Left ventricle myocardium inferior (tissue), 1 donor: ENCODE measurements at regions of chr3 and their contacts with region 1.

Region 1: GRCh38 chr3:98994128-98994762 is 92.8 kb upstream of the DCBLD2 start:
- DNase-seq: no peak
- H3K4me3 ChIP-seq: no peak overlapping the region
- H3K27ac ChIP-seq: no peak overlapping the region
- H3K4me1 ChIP-seq: no peaks in the 10 kb centered on the region
- H3K27me3 ChIP-seq: no peaks in the 10 kb centered on the region
- CTCF ChIP-seq: peak; percentile 75

Region 2: GRCh38 chr3:98593046-98593936 is 401.0 kb before region 1 on chr3 and contains the start of gene CPOX:
- intact Hi-C with region 1: loop called (anchors 10 kb)
- DNase-seq: peak; percentile 88
- H3K4me3 ChIP-seq: peak within 1 kb of the TSS; percentile 92
- H3K27ac ChIP-seq: peak within 1 kb of the TSS; percentile 90
- H3K4me1 ChIP-seq: peaks cover 47% of the 10 kb centered on the region
- H3K27me3 ChIP-seq: no peaks in the 10 kb centered on the region
- CTCF ChIP-seq: no peak
- total RNA-seq, gene CPOX: 12.8 TPM

Region 3: DNA sequence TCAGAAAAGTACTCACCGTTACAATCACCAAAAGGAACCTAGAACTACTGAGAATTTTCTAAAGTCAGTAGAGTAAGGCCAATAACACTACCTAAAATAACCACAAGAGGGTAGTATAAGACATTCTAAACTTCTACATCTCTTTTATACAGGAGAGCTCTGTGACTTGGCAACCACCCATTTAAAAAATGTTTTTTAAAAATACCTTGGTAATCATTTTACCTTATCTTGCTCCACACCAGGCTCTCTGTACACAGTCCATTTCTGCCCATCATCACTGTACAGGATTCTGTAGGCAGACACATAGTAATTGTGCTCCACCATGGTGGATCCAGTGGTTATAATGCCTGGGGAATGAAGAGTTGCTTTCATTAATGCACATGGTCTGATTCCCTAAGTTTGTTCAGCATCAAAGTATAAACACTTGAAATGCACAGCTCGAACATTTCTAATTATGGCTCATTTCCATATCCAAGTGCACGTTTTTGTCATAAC is 176.7 kb before region 1 on chr3:
- intact Hi-C with region 1: loop called (anchors 2 kb)
- DNase-seq: no peak
- H3K4me3 ChIP-seq: no peak overlapping the region
- H3K27ac ChIP-seq: no peak overlapping the region
- H3K4me1 ChIP-seq: peaks cover 5% of the 10 kb centered on the region
- H3K27me3 ChIP-seq: no peaks in the 10 kb centered on the region
- CTCF ChIP-seq: peak; percentile 88